ENCODE measurements at regions of chr20 and their contacts with region 1.

Region 1: DNA sequence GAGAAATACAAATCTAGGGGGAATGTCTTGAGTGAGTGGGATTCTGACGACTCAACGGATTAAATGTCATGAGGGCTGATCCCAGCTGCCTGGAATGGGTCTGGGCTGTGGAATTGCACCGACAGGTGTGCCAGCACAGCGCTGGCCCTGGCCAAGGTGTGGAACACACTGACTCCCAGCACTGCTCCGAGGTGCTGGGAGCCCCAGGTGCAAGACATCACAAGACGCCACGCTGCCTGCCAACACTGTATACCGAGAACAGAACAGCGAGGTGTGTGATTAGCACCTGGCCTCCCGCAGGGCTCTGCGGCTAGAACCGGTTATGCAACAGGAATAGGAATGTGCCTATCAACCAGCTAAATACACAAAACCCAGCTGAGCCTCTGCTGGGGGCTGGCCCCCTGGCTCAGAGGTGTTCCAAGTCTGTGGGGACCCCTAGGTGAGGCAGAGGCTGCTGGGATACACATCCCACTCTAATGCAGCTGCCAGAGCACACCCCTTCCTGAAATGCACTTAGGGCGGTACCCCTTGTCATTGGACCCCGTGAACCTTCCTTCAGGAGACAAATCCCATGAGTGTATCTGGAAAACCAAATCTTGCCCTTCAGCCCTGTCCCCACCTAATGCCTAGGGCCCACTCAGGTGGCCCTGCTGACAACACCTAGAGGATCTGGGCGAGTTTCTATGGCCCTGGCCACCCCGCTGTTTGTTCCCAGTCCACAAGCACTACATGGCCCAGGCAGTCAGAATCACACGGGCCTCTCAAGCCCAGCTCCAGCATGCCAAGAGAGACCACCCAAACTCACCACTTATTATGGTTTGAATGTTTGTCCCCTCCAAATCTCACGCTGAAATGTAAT is 24.9 kb upstream of the APMAP start:
- DNase-seq: peak; percentile 59
- H3K4me3 Mint-ChIP-seq: no peak overlapping the region
- H3K27ac Mint-ChIP-seq: no peak overlapping the region
- H3K4me1 Mint-ChIP-seq: no peaks in the 10 kb centered on the region
- H3K27me3 Mint-ChIP-seq: no peaks in the 10 kb centered on the region
- CTCF ChIP-seq: no peak

Region 2: DNA sequence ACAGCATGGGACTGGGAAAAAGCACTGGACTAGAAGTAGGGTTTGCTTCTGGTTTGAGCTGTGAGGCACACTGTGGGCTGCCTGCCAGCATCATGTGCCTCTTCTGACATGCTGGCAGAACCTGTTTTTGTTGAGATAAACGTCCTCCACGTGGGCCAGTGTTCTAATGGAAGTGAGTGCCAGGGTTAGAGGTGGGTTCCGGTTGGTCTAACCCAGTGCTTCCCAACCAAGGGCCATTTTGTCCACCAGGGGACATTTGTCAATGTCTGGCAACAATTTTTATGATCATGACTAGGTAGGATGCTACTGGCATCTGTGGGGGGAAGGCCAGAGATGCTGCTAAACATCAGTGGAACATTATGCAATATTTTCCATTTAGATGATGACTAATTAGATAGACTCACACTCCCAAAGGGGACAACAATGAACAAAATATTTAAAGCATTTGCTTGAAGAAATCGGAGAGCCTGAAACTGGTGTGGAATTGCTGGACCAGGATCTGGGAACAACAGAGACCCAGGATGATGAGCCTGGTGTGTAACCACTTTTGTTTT is 17.1 kb before region 1 on chr20:
- CTCF ChIA-PET with region 1: no interaction called
- intact Hi-C with region 1: loop called (anchors 1 kb)
- DNase-seq: peak; percentile 62
- H3K4me3 Mint-ChIP-seq: no peak overlapping the region
- H3K27ac Mint-ChIP-seq: peak overlapping the region; percentile 86
- H3K4me1 Mint-ChIP-seq: peaks cover 9% of the 10 kb centered on the region
- H3K27me3 Mint-ChIP-seq: no peaks in the 10 kb centered on the region
- CTCF ChIP-seq: no peak

Measured in Calu3 (cell line).